Heart left ventricle (tissue), 16 donors: ENCODE measurements at regions of chr4 and their contacts with region 1.

Region 1: DNA sequence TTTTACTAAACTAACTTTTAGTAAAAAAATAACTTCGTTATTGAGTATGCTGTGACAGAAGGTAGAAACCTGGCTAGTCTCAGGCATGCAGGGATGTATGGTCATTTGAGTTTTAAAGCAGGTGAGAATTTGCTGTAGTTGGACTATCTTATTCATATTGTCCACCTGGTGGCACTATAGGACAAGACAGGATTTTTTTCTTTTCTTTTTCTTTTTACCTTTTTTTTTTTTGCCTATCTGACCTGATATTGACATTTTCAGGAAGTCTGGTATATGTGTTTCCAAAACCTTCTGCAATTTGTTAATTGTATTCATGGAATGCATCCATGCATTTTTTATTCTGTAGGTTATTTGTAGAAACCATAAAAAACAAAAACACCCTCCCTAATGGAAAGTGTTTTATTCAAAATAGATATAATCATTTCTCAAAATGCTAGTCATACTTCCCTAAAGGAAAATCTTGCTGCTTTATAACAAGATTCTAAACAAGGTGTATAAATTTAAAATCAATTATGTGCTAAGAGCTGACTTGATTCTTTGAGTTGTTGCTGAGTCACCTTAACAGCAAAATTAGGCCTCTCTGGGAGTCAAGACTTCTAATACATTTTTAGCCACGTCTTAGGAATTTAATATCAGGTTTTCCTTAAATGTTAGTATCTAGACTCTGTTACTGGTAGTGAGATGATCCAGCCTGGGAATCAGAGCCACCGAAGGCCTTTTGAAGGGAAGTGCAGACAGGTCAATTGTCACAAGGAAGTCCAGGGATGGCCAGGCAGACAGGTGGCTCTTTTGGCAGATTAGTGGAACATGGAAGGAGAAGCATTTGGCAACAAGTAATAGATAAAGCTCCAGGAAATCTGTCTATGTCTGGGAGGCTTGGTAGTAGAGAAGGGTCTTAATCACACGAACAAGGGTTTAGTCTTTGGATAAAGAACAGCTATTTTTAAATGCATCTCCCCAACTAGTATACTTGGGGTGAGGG is 201.3 kb upstream of the GNPDA2 start:
- DNase-seq: no peak
- ATAC-seq: no peak
- H3K4me3 ChIP-seq: no peak overlapping the region
- H3K27ac ChIP-seq: no peak overlapping the region
- H3K4me1 ChIP-seq: peaks cover 0 to 17% (median 0%) of the 10 kb centered on the region in 12 donors
- H3K27me3 ChIP-seq: no peaks in the 10 kb centered on the region
- CTCF ChIP-seq: peak; percentile 26 to 64 (median 48)
- POLR2A ChIP-seq: no peak

Region 2: GRCh38 chr4:44726262-44726871 is 201.3 kb before region 1 on chr4 and contains the start of gene GNPDA2:
- intact Hi-C with region 1: no loop called
- DNase-seq: peak; percentile 91 to 95 (median 95)
- ATAC-seq: peak; percentile 97 to 99 (median 98)
- H3K4me3 ChIP-seq: peak within 1 kb of the TSS; percentile 74 to 91 (median 80)
- H3K27ac ChIP-seq: peak within 1 kb of the TSS; percentile 56 to 94 (median 85)
- H3K4me1 ChIP-seq: peaks cover 0 to 33% (median 13%) of the 10 kb centered on the region in 12 donors
- H3K27me3 ChIP-seq: no peaks in the 10 kb centered on the region
- CTCF ChIP-seq: peak in 6 of 12 donors; percentile 12 to 51 (median 28)
- POLR2A ChIP-seq: peak in 1 of 2 donors; percentile 65
- total RNA-seq, gene GNPDA2: 8.7 to 20.0 (median 12.5) TPM

Region 3: DNA sequence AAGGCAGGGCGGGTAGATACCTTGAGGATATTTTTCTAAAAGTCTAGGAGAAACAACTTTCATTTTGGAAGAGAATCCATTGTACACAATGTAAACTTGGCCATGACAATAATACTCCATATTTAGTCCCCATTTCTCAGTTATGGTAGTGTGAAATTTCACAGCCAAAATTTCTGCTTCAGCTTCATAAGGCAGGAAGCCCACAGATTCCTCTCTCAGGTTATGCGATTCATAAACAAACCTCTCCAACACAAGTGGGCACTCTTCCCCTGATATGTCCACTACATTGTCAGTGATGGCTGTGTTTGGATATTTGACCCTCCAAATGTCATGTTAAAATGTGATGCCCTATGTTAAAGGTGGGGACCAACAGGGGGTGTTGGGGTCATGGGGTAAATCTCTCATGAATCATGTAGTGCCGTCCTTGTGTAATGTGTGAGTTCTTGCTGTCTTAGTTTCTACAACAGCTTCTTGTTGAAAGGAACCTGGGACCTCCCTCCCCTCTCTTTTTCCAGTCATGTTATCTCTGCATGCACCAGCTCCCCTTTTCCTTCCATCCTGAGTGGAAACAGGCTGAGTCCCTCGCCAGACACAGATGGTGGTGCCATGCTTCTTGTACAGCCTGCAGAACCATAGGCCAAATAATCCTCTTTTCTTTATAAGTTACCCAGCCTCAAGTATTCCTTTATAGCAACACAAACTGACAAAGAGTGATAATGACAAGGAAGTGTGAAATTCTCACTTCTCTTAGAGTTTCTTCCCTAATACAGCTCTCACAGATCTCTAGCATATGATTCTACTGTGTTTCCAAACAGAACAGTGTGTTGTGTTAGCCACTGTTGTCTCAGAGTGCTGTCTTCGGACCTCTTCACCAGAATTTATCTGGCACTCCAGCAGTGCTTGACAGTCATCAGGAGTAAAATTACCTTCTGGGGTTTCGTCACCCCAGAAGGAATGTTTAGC is 397.0 kb after region 1 on chr4:
- intact Hi-C with region 1: loop called in 1 of 10 experiments (anchors 10 kb)
- DNase-seq: peak in 3 of 5 donors; percentile 17 to 57 (median 43)
- ATAC-seq: peak; percentile 65 to 98 (median 76)
- H3K4me3 ChIP-seq: no peak overlapping the region
- H3K27ac ChIP-seq: peak overlapping the region in 5 of 12 donors; percentile 9 to 61 (median 20)
- H3K4me1 ChIP-seq: no peaks in the 10 kb centered on the region
- H3K27me3 ChIP-seq: no peaks in the 10 kb centered on the region
- CTCF ChIP-seq: no peak
- POLR2A ChIP-seq: no peak

Region 4: GRCh38 chr4:45331802-45332201 is 404.1 kb after region 1 on chr4:
- intact Hi-C with region 1: loop called in 4 of 10 experiments (anchors 2 to 10 kb)
- DNase-seq: no peak
- ATAC-seq: no peak
- H3K4me3 ChIP-seq: no peak overlapping the region
- H3K27ac ChIP-seq: no peak overlapping the region
- H3K4me1 ChIP-seq: no peaks in the 10 kb centered on the region
- H3K27me3 ChIP-seq: no peaks in the 10 kb centered on the region
- CTCF ChIP-seq: no peak
- POLR2A ChIP-seq: no peak

Region 5: DNA sequence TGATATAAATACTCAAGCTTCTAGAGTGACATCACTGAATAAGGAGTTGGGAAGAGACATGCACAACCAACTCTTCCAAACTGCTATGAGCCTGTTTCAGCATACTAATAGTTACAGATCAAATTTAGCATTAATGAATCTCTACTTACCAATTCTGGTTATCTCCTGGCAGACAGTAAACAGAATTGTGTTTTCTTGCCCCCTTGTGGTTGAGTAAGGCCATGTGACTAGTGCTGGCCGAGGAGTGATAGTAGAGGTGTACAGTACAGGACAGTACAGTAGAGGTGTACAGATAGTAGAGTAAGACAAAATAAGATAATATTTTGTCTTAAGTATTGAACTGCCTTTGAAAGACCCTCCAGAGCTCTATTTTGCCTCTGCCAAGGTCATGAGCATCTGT is 514.8 kb after region 1 on chr4:
- intact Hi-C with region 1: loop called in 9 of 10 experiments (anchors 1 to 10 kb)
- DNase-seq: no peak
- ATAC-seq: peak in 3 of 4 donors; percentile 59 to 65 (median 62)
- H3K4me3 ChIP-seq: no peak overlapping the region
- H3K27ac ChIP-seq: no peak overlapping the region
- H3K4me1 ChIP-seq: peaks cover 0 to 5% (median 0%) of the 10 kb centered on the region in 12 donors
- H3K27me3 ChIP-seq: no peaks in the 10 kb centered on the region
- CTCF ChIP-seq: peak in 9 of 12 donors; percentile 6 to 47 (median 28)
- POLR2A ChIP-seq: no peak

Region 6: DNA sequence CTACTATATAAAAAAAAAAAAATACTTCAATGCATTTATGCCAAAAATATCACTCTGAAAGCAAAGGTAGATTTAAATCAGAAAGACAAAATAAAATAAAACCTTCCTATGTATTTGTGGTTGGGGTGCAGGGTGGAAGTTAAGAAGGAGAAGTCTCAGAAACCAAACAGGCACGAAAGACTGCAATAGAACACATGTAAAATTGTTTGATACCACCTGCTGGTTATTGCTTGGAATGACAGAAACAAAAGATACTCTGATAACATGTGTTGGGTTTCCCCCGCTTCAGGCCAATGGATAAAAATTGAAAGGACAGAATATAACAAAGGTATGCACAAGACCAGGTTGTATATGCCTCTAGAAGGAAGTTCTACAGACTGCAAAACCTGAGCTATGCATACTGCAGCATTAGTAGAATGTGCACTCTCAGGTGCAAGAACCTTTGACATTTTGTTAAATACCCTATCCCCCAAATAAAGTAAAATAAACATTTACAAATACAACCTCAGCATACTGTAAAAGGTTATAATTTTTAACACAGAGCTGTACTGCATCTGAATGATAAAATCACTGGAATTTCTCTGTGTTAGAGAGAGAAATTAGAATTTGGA is 1343.4 kb after region 1 on chr4:
- intact Hi-C with region 1: loop called in 8 of 10 experiments (anchors 5 to 10 kb)
- DNase-seq: no peak
- ATAC-seq: no peak
- H3K4me3 ChIP-seq: no peak overlapping the region
- H3K27ac ChIP-seq: no peak overlapping the region
- H3K4me1 ChIP-seq: no peaks in the 10 kb centered on the region
- H3K27me3 ChIP-seq: peaks cover 0 to 7% (median 0%) of the 10 kb centered on the region in 9 donors
- CTCF ChIP-seq: peak in 11 of 12 donors; percentile 21 to 51 (median 37)
- POLR2A ChIP-seq: no peak